ENCODE measurements at regions of chr20 and their contacts with region 1.

Region 1: GRCh38 chr20:19692685-19693119 is 65.4 kb upstream of the RIN2 start:
- DNase-seq: peak; percentile 28
- H3K4me3 Mint-ChIP-seq: no peak overlapping the region
- H3K27ac Mint-ChIP-seq: no peak overlapping the region
- H3K4me1 Mint-ChIP-seq: no peaks in the 10 kb centered on the region
- H3K27me3 Mint-ChIP-seq: no peaks in the 10 kb centered on the region
- CTCF ChIP-seq: peak; percentile 30

Region 2: GRCh38 chr20:19497064-19497463 is 195.6 kb before region 1 on chr20:
- CTCF ChIA-PET with region 1: no interaction called
- intact Hi-C with region 1: no loop called
- DNase-seq: no peak
- H3K4me3 Mint-ChIP-seq: no peak overlapping the region
- H3K27ac Mint-ChIP-seq: no peak overlapping the region
- H3K4me1 Mint-ChIP-seq: no peaks in the 10 kb centered on the region
- H3K27me3 Mint-ChIP-seq: no peaks in the 10 kb centered on the region
- CTCF ChIP-seq: no peak

Region 3: GRCh38 chr20:19742974-19743639 is 50.4 kb after region 1 on chr20:
- CTCF ChIA-PET with region 1: no interaction called
- intact Hi-C with region 1: loop called (anchors 10 kb)
- DNase-seq: no peak
- H3K4me3 Mint-ChIP-seq: no peak overlapping the region
- H3K27ac Mint-ChIP-seq: no peak overlapping the region
- H3K4me1 Mint-ChIP-seq: no peaks in the 10 kb centered on the region
- H3K27me3 Mint-ChIP-seq: no peaks in the 10 kb centered on the region
- CTCF ChIP-seq: no peak

Region 4: GRCh38 chr20:19802492-19803158 is 109.9 kb after region 1 on chr20:
- CTCF ChIA-PET with region 1: no interaction called
- intact Hi-C with region 1: loop called (anchors 1 kb)
- DNase-seq: peak; percentile 32
- H3K4me3 Mint-ChIP-seq: no peak overlapping the region
- H3K27ac Mint-ChIP-seq: no peak overlapping the region
- H3K4me1 Mint-ChIP-seq: peaks cover 7% of the 10 kb centered on the region
- H3K27me3 Mint-ChIP-seq: no peaks in the 10 kb centered on the region
- CTCF ChIP-seq: peak; percentile 17

Region 5: DNA sequence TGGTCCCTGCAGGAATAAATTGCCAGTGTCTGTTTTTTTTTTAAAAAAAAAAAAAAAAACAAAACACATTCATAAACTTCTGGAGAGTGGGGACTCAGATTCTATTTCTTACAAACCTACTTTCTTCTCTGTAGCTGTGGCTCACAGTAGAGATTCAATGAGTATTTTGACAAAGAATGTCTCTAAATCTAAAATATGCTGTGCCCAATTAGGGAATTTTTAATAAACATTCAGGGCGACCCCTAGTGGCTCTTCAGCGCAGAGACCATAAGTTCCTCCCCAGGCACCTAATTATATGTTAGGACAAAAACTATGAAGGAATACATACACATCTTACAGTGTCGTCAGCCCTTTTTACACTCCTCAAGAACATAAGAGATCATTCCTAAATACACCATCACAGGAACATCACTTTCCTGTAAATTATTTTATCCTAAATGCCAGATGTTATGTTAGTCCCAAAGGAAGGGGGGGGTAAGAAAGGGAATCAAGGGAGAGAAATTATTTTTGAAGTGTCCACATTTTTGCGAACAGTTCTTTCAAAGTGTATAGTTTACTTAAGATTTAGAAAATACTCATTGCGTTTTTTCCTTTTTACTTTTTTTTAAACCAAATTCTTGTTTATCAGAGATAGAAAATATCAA is 302.6 kb after region 1 on chr20:
- CTCF ChIA-PET with region 1: no interaction called
- intact Hi-C with region 1: loop called (anchors 10 kb)
- DNase-seq: no peak
- H3K4me3 Mint-ChIP-seq: no peak overlapping the region
- H3K27ac Mint-ChIP-seq: no peak overlapping the region
- H3K4me1 Mint-ChIP-seq: peaks cover 8% of the 10 kb centered on the region
- H3K27me3 Mint-ChIP-seq: no peaks in the 10 kb centered on the region
- CTCF ChIP-seq: peak; percentile 21

Measured in Calu3 (cell line).